Natural killer cell (primary cell): ENCODE measurements at regions of chr16 and their contacts with region 1.

Region 1: DNA sequence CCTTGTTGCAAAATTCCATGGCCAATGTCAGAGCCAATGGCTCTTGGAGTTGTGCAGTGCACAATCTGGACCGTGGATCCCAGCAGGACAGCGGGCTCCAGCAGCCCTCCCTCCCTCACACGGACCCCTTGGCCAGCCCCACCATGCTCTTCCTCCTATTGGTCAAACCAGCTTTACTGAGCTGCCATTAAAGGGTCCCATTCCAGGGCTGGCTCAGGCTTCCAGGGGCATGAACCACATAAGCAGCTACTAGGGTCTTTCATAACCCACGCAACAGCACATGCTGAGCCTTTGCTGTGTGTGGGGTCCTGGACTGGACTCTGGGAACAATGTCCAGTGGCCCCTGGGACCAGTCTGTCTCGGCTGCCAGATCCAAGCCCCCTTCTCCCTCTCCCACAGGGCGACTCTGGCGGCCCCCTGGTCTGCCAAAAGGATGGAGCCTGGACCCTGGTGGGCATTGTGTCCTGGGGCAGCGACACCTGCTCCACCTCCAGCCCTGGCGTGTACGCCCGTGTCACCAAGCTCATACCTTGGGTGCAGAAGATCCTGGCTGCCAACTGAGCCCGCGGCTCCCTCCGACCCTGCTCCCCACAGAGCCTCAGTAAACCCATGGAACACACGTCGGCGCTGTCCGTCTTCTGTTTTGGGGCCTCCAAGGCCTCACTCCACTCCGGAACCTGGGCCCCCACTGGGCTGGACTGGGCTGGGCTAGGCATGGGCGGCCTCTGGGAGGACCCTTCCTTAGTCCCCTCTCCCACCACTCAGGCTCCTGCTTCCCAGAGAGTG is 5.7 kb downstream of the CTRB1 start:
- DNase-seq: no peak
- ATAC-seq: no peak
- H3K4me3 ChIP-seq: no peak overlapping the region
- H3K4me3 Mint-ChIP-seq: no peak overlapping the region
- H3K27ac ChIP-seq: no peak overlapping the region
- H3K27ac Mint-ChIP-seq: no peak overlapping the region
- H3K4me1 ChIP-seq: peaks cover under 1% of the 10 kb centered on the region
- H3K4me1 Mint-ChIP-seq: peaks cover 0 to 9% of the 10 kb centered on the region in 2 donors
- H3K27me3 ChIP-seq: no peaks in the 10 kb centered on the region
- H3K27me3 Mint-ChIP-seq: peaks cover 0 to 3% of the 10 kb centered on the region in 2 donors
- CTCF ChIP-seq: no peak

Region 2: DNA sequence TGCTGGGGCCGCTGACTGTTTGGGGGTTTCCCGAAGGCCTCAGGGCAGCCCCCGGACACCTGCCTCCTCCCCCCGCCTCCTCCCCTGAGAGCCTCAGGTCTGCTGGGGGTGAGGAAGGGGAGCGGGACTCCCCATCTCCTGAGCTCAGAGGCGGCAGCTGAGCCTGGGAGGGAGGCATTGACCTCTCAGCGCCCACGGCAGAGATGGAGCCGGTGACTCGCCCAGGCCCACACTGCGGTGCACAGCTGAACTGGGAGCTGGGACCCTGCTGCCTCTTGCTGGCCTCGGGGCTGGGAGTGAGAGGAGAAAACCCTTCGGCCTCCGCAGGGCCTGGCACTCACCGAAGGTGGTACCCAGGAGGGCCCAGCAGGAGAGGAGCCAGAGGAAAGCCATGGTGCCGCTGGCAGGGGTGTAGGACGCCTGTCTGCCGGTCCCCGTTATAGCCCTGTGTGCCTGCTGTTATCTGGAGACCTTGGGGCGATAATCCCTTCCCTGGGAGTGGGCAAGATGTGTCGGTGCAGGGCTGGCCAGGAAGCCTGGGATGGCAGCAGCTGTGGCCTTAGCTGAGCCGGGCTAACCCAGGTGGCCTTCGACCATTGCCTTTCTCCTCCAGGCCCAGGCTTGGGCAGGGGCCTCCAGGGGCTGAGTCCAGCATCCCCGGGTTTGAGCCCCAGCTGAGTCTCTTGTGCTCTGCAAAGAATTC is 17.6 kb before region 1 on chr16 and contains the start of gene CTRB2:
- intact Hi-C with region 1: loop called (anchors 2 kb)
- DNase-seq: no peak
- ATAC-seq: no peak
- H3K4me3 ChIP-seq: no peak within 1 kb of the TSS
- H3K4me3 Mint-ChIP-seq: no peak within 1 kb of the TSS
- H3K27ac ChIP-seq: no peak within 1 kb of the TSS
- H3K27ac Mint-ChIP-seq: no peak within 1 kb of the TSS
- H3K4me1 ChIP-seq: no peaks in the 10 kb centered on the region
- H3K4me1 Mint-ChIP-seq: no peaks in the 10 kb centered on the region
- H3K27me3 ChIP-seq: no peaks in the 10 kb centered on the region
- H3K27me3 Mint-ChIP-seq: peaks cover 2 to 6% of the 10 kb centered on the region in 2 donors
- CTCF ChIP-seq: no peak
- total RNA-seq, gene CTRB2: not detected

Region 3: DNA sequence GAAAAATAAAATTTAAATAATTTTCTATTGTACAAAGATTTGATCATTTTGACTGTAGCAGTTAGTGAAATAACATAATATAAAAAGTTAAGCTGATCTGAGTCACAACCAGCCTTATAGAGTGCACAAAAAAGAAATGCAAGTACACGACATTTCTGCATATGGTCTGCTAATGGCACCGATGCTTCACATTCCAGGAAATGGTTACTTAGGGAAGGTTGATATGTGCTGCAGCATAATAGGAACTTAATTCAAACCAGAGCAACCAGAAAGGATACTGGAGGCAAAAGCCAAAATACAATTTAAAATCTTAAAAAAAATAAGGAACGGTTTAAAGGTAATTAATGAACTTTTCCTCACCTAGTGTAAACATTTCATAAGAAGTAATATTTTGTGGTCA is 218.8 kb after region 1 on chr16:
- intact Hi-C with region 1: no loop called
- DNase-seq: no peak
- ATAC-seq: no peak
- H3K4me3 ChIP-seq: no peak overlapping the region
- H3K4me3 Mint-ChIP-seq: no peak overlapping the region
- H3K27ac ChIP-seq: no peak overlapping the region
- H3K27ac Mint-ChIP-seq: no peak overlapping the region
- H3K4me1 ChIP-seq: no peaks in the 10 kb centered on the region
- H3K4me1 Mint-ChIP-seq: no peaks in the 10 kb centered on the region
- H3K27me3 ChIP-seq: no peaks in the 10 kb centered on the region
- H3K27me3 Mint-ChIP-seq: no peaks in the 10 kb centered on the region
- CTCF ChIP-seq: no peak